Gastrocnemius medialis (tissue), 4 donors: ENCODE measurements at regions of chr3 and their contacts with region 1.

Region 1: GRCh38 chr3:99817437-99818240 is at the start of gene CMSS1:
- DNase-seq: peak; percentile 91 to 92
- ATAC-seq: peak; percentile 90
- H3K4me3 ChIP-seq: peak within 1 kb of the TSS; percentile 67 to 78 (median 69)
- H3K27ac ChIP-seq: peak within 1 kb of the TSS; percentile 89 to 98 (median 91)
- H3K4me1 ChIP-seq: peaks cover 26 to 38% of the 10 kb centered on the region in 2 donors
- H3K27me3 ChIP-seq: no peaks in the 10 kb centered on the region
- CTCF ChIP-seq: peak; percentile 37 to 51 (median 47)
- POLR2A ChIP-seq: peak; percentile 83
- total RNA-seq, gene CMSS1: 23.2 to 89.5 (median 67.6) TPM

Region 2: GRCh38 chr3:97952280-97952679 is 1865.4 kb before region 1 on chr3:
- in situ Hi-C with region 1: no loop called
- intact Hi-C with region 1: loop called (anchors 10 kb)
- DNase-seq: peak; percentile 70 to 88
- ATAC-seq: peak; percentile 96 to 98
- H3K4me3 ChIP-seq: no peak overlapping the region
- H3K27ac ChIP-seq: peak overlapping the region; percentile 68 to 89 (median 86)
- H3K4me1 ChIP-seq: peaks cover 11 to 13% of the 10 kb centered on the region in 2 donors
- H3K27me3 ChIP-seq: no peaks in the 10 kb centered on the region
- CTCF ChIP-seq: no peak
- POLR2A ChIP-seq: no peak

Region 3: GRCh38 chr3:98522244-98523090 is 1295.2 kb before region 1 on chr3 and contains the start of gene CLDND1:
- in situ Hi-C with region 1: no loop called
- intact Hi-C with region 1: loop called (anchors 5 kb)
- DNase-seq: peak; percentile 94 to 97
- ATAC-seq: peak; percentile 93 to 96
- H3K4me3 ChIP-seq: peak within 1 kb of the TSS; percentile 72 to 87 (median 75)
- H3K27ac ChIP-seq: peak within 1 kb of the TSS; percentile 90 to 98 (median 95)
- H3K4me1 ChIP-seq: peaks cover 14 to 20% of the 10 kb centered on the region in 2 donors
- H3K27me3 ChIP-seq: no peaks in the 10 kb centered on the region
- CTCF ChIP-seq: peak in 1 of 5 experiments; percentile 9
- POLR2A ChIP-seq: peak; percentile 87 to 88
- total RNA-seq, gene CLDND1: 47.5 to 115 (median 87.2) TPM

Region 4: GRCh38 chr3:100260685-100261484 is 443.2 kb after region 1 on chr3 and contains the start of gene TBC1D23:
- in situ Hi-C with region 1: no loop called
- intact Hi-C with region 1: loop called (anchors 5 kb)
- DNase-seq: peak; percentile 99 to 100
- ATAC-seq: peak; percentile 94 to 95
- H3K4me3 ChIP-seq: peak within 1 kb of the TSS; percentile 82 to 100 (median 92)
- H3K27ac ChIP-seq: peak within 1 kb of the TSS; percentile 95 to 100 (median 98)
- H3K4me1 ChIP-seq: peaks cover 50 to 54% of the 10 kb centered on the region in 2 donors
- H3K27me3 ChIP-seq: no peaks in the 10 kb centered on the region
- CTCF ChIP-seq: peak in 2 of 5 experiments; percentile 20 to 23
- POLR2A ChIP-seq: peak; percentile 97 to 98
- total RNA-seq, gene TBC1D23: 14.2 to 56.4 (median 45.0) TPM

Region 5: GRCh38 chr3:100334488-100335351 is 517.1 kb after region 1 on chr3 and contains the start of gene NIT2:
- in situ Hi-C with region 1: no loop called
- intact Hi-C with region 1: loop called (anchors 5 kb)
- DNase-seq: peak; percentile 69 to 85
- ATAC-seq: peak; percentile 89 to 91
- H3K4me3 ChIP-seq: peak within 1 kb of the TSS; percentile 59 to 68 (median 64)
- H3K27ac ChIP-seq: peak within 1 kb of the TSS; percentile 85 to 89 (median 88)
- H3K4me1 ChIP-seq: peaks cover 0 to 10% of the 10 kb centered on the region in 2 donors
- H3K27me3 ChIP-seq: no peaks in the 10 kb centered on the region
- CTCF ChIP-seq: peak in 1 of 5 experiments; percentile 15
- POLR2A ChIP-seq: peak; percentile 76 to 78
- total RNA-seq, gene NIT2: 13.5 to 45.2 (median 24.2) TPM

Region 6: DNA sequence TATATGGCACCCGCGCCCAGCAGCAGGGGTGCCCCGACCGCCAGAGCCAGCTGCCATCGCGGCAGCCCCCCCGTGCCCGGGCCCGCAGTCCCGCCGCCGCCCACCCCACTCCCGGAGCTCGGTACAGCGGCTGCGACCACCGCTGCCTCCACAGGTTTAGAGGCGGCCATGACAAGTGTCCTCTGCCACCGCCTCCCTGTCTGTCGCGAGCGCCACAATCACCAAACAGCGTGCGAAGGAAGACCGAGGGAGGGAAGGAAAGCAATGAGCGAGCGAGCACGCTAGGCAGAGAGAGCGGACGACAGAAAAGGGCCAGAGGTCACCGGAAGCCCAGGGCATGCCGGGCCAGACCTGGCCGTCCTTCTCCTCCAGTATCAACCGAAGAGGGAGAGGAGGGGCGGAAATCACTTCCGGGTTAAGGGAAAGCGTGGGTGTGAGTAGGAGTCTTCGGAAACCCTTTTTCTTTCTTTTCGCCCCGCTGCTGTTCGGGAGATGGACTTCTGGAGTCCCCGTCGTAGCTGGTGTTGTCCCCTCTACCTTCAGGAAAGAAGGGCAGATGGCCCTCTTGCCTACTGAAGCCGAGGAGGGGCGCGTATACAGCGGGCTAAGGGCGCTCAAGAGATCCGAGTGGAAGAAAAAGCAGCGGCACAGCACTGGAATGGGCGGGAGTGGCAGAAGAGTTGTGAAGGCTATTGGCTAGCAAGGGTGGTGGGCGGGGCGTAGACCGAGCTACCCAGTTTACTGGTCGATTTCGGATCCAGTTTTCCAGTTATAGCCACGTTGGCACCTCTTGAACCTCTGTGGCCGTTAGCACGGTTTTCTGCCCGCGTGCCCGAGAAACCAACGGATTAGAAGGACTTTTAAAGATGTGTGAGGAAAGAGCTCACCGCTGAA is 583.4 kb after region 1 on chr3 and contains the starts of genes LNP1 and TOMM70:
- in situ Hi-C with region 1: no loop called
- intact Hi-C with region 1: loop called (anchors 5 kb)
- DNase-seq: peak; percentile 97 to 98
- ATAC-seq: peak; percentile 95 to 97
- H3K4me3 ChIP-seq: peak within 1 kb of the TSS; percentile 84 to 96 (median 92)
- H3K27ac ChIP-seq: peak within 1 kb of the TSS; percentile 84 to 99 (median 97)
- H3K4me1 ChIP-seq: peaks cover 53 to 57% of the 10 kb centered on the region in 2 donors
- H3K27me3 ChIP-seq: no peaks in the 10 kb centered on the region
- CTCF ChIP-seq: no peak
- POLR2A ChIP-seq: peak; percentile 47 to 81
- total RNA-seq, gene LNP1: 1.1 to 3.7 (median 1.9) TPM
- total RNA-seq, gene TOMM70: 57.6 to 82.2 (median 64.3) TPM

Region 7: GRCh38 chr3:100708967-100709841 is 891.6 kb after region 1 on chr3 and contains the start of gene TFG:
- in situ Hi-C with region 1: loop called in 1 of 4 experiments (anchors 25 kb)
- intact Hi-C with region 1: no loop called
- DNase-seq: peak; percentile 95 to 98
- ATAC-seq: peak; percentile 95 to 98
- H3K4me3 ChIP-seq: peak within 1 kb of the TSS; percentile 73 to 97 (median 86)
- H3K27ac ChIP-seq: peak within 1 kb of the TSS; percentile 92 to 99 (median 96)
- H3K4me1 ChIP-seq: peaks cover 18 to 24% of the 10 kb centered on the region in 2 donors
- H3K27me3 ChIP-seq: no peaks in the 10 kb centered on the region
- CTCF ChIP-seq: no peak
- POLR2A ChIP-seq: peak; percentile 81 to 84
- total RNA-seq, gene TFG: 57.2 to 77.9 (median 67.3) TPM